HEK293 (cell line): ENCODE measurements at regions of chr7 and their contacts with region 1.

Region 1: DNA sequence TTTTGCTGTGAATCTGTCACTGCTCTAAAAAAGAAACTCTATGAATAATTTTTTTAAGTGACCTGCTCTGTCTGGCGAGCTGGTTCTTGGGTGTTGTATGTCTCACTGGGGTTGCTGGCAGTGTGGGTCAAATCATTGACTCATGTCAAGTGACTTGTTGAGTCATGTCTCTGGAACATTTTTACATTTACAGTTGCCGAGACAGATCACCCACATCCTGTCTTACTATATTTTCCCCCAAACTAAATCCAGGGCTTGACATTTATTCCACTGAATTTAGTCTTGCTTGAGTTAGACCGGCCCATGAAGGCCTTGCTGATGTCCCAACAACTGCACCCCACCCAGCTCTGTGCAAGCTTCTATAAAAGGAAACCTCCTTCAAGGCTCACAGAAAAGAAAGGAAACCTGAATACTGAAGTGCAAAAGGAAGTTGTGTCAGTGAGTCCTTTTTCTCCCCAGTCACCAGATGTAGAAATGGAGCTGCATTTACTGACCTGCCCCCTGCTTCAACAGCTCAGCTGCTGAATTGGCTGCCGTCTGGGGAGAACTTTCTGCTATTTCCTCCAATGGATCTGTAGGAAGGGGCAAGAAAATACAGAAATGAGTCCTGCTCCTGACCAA is 290.3 kb downstream of the TNS3 start:
- H3K4me3 ChIP-seq: no peak overlapping the region
- H3K27ac ChIP-seq: no peak overlapping the region
- H3K4me1 ChIP-seq: no peaks in the 10 kb centered on the region
- CTCF ChIP-seq: no peak

Region 2: DNA sequence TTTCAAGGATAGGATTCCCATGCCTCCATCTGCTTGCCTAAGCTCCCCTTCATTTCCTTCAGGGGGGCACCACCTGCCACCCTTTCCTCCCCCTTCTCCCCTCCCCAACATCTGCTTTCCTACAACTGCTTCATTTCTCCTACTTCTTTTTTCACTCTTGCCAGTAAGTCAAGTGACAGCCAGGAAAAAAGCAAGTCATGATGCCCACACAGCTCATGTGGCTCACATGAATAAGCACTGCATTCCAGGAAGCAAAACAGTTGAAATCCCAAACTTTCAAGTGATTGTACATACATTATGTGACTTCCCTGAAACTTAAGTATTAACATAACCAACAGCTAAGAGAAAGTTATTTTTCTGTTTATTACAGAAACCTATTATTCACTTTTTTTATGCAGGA is 211.7 kb after region 1 on chr7:
- CTCF ChIA-PET with region 1: interaction called, 10 read pairs
- POLR2A ChIA-PET with region 1: no interaction called
- H3K4me3 ChIP-seq: no peak overlapping the region
- H3K27ac ChIP-seq: no peak overlapping the region
- H3K4me1 ChIP-seq: peaks cover 3% of the 10 kb centered on the region; the same call in 1 of the 2 replicates
- CTCF ChIP-seq: no peak